SK-N-SH (cell line): ENCODE measurements at regions of chr7 and their contacts with region 1.

Region 1: DNA sequence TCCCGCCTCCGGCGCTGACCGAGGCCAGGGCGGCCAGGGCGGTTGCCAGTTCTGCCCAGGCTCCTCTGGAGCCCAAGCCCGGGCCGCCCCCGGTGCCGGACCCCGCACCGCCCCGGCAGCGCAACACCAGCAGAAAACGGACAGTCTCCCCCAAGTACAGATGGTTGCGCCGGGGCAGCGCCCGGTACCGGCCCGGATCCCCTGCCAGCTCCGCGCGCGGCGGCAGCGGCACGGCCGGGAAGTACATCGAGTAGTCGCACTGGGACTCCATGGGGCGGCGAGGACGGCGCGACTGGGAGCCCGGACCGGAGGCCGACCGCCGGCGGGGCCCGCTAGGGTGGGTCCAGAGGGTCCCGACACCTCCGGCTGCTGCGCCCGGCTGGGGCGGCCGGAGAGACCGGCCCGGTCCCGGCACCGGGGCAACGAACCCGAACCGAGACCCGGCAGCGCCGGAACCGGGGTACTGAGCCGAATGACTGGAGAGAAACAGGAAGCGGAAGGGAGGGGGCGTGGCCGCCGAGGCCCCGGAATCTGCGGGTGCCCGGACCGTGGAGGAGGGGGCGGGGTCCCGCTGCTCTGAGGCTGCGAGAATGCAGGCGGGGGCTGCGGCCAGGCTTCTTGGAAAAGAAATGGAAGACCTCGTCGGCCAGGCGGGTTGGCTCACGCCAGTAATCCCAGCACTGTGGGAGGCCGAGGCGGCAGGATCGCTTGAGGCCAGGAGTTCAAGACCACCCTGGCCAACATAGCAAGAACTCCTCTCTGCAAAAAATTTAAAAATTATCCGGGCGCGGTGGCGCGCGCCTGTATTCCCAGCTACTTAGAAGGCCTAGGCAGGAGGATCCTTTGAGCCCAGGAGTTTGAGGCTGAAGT is at the start of gene TRAPPC14:
- DNase-seq: peak; percentile 100
- H3K4me3 ChIP-seq: peak within 1 kb of the TSS; percentile 87 to 93
- H3K27ac ChIP-seq: peak within 1 kb of the TSS; percentile 36 to 62
- H3K4me1 ChIP-seq: peaks cover 11 to 19% of the 10 kb centered on the region in 2 experiments; a peak in 2 of 4 replicates
- H3K27me3 ChIP-seq: no peaks in the 10 kb centered on the region
- CTCF ChIP-seq: no peak
- EP300 ChIP-seq: peak in 1 of 2 experiments; percentile 30; a peak in 1 of 4 replicates
- RAD21 ChIP-seq: no peak
- polyA plus RNA-seq, gene TRAPPC14: 13.9 and 16.4 TPM in 2 replicates

Region 2: DNA sequence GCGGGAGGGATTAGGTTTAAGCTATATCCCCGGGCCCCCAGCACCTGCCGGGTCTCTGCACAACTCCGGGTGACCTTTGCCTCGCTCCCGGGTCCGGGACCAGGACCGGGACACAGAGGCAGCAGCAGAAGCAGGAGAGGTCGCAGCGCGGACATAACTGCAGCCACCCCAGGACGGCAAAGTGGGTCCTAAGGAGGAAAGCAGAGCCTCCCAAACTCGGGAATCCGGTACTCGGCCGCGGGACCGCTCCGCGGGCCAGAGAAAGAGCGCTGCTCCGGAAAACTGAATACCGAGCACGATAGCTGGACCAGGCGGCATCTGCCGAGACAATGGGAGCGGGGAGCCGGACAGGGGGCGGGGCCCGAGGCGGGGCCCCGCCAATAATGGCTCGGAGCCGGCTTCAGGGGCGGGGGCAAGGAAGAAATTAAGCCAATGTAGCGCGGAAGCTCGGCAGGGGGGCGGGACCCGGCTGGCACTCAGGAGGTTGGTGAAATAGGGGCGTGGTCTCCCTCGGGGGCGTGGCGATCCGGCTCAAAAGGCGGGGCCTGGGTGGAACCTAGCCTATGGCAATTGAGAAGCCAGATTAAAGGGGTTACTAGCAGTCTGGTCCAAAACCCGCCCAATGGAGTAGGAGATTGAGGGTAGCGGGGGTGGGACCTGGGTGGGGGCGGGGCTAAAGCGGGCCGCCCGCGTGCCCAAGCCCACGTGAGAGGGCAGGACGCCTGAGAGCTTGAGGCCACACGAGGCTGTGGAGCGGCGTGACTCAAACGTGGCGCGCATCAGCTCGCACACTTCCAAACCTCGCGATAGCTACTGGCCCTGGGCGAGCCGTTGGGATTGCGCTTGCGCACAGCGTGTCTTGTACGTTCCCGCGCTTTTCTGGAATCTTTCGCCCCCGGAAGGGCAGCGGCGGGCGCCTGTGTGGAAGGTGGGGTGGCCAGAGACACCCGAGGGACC is 18.9 kb after region 1 on chr7 and contains the starts of genes GPC2 and STAG3:
- CTCF ChIA-PET with region 1: interaction called, 15 read pairs
- POLR2A ChIA-PET with region 1: interaction called, 8 read pairs
- DNase-seq: peak; percentile 100
- H3K4me3 ChIP-seq: peak within 1 kb of the TSS; percentile 82 to 98
- H3K27ac ChIP-seq: peak within 1 kb of the TSS in 1 of 2 experiments; percentile 69; a peak in 1 of 4 replicates
- H3K4me1 ChIP-seq: peaks cover 0 to 16% of the 10 kb centered on the region in 2 experiments; a peak in 1 of 4 replicates
- H3K27me3 ChIP-seq: no peaks in the 10 kb centered on the region
- CTCF ChIP-seq: no peak
- EP300 ChIP-seq: no peak
- RAD21 ChIP-seq: no peak
- polyA plus RNA-seq, gene GPC2: 12.9 and 14.2 TPM in 2 replicates
- polyA plus RNA-seq, gene STAG3: 0.10 and 0.31 TPM in 2 replicates